Calu3 (cell line): ENCODE measurements at regions of chr7 and their contacts with region 1.

Region 1: DNA sequence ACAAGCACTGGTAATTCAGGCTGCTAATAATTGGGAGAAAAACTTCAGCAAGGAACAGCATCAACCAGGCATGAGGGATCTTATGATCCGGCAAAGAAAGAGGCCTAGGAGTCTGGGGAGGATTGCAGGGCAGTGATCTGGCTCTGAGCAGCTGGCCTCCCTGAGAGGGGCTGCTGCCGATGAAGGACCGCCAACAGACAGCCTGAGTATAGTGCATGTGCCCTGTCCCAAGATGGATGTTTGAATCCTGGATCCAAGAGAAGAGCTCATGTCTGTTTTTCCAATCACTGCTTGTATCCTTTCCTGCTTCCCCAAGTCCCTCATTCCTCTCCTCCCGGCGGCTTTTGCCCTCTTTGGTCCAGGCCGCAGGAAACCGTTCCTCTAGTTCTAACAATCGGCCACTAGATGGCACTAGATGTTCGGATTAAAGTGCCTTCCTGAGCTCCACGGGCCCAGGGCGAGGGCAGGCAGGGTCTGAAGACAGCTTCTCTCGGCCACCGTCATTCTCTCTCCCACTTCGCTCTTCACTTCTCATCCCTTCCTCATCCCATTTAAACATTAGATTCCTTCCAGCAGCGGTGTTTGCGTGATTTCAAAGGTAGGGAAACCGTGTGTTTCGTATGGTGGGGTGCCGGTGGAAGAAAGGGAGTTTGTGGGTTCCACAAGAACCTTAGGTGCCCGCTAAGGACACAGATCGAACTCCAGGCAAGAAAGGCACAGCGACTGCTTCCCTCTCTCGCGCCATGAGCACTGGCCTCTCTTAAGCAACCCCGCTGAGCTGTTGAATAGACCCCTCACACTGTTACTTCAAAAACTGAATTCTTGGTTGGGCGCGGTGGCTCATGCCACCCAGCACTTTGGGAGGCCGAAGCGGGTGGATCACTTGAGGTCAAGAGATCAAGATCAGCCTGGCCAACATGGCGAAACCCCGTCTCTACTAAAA is 82.4 kb downstream of the ADCYAP1R1 start:
- DNase-seq: peak; percentile 87
- H3K4me3 Mint-ChIP-seq: no peak overlapping the region
- H3K27ac Mint-ChIP-seq: no peak overlapping the region
- H3K4me1 Mint-ChIP-seq: no peaks in the 10 kb centered on the region
- H3K27me3 Mint-ChIP-seq: peaks cover 50% of the 10 kb centered on the region
- CTCF ChIP-seq: peak; percentile 92

Region 2: GRCh38 chr7:30983042-30983913 is 151.2 kb before region 1 on chr7:
- CTCF ChIA-PET with region 1: interaction called, 15 read pairs
- intact Hi-C with region 1: no loop called
- DNase-seq: peak; percentile 96
- H3K4me3 Mint-ChIP-seq: peak overlapping the region; percentile 13
- H3K27ac Mint-ChIP-seq: no peak overlapping the region
- H3K4me1 Mint-ChIP-seq: peaks cover 30% of the 10 kb centered on the region
- H3K27me3 Mint-ChIP-seq: peaks cover 51% of the 10 kb centered on the region
- CTCF ChIP-seq: peak; percentile 97

Region 3: DNA sequence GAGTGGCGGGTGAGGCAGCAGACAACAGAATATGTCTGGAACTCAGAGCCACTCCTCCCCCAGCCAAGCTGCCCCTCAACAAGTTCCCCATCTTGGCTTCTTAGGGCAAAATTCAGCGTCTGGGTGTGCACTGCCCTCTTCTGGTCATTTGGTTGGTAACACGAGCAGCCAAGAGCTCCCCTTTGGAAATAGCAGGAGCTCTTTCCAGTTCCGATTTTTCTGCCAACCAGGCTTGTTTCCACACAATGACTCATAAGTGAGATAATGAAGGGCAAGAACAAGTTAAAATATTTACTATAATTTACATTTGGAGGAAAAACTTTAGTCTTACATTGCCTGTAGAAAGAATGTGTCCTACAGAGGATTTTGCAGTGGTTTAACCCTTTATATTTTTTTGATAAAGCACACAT is 11.9 kb before region 1 on chr7:
- CTCF ChIA-PET with region 1: interaction called, 39 read pairs
- intact Hi-C with region 1: no loop called
- DNase-seq: peak; percentile 82
- H3K4me3 Mint-ChIP-seq: no peak overlapping the region
- H3K27ac Mint-ChIP-seq: no peak overlapping the region
- H3K4me1 Mint-ChIP-seq: peaks cover 7% of the 10 kb centered on the region
- H3K27me3 Mint-ChIP-seq: peaks cover 78% of the 10 kb centered on the region
- CTCF ChIP-seq: peak; percentile 85

Region 4: DNA sequence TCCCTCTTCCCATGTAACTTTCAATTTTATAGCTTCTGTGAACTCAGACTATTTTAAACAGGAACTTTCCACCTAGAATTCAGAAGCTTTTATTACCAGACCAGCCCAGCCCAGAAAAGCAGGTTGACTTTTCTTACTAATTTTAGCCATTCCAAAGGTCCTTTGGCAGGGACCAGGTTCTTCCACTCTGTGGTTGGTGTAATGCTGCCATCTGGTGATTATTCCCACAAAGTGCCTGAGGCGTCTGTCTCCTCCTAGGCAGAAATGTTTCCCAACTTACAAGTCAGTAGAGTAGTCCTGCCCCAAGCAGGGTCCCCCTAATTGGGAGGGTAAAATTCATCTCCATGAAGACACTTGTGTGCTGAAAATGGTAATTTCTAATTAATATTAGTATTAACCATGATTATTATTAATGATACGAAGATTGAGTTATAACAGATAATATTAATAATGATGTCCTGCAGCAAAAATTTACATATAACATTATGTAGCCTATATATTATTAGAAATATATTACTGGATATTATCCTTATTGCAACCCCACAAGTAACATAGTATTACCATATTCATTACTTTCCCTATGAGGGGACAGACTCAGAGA is 499.5 kb after region 1 on chr7:
- CTCF ChIA-PET with region 1: interaction called, 19 read pairs
- intact Hi-C with region 1: loop called (anchors 5 kb)
- DNase-seq: peak; percentile 83
- H3K4me3 Mint-ChIP-seq: no peak overlapping the region
- H3K27ac Mint-ChIP-seq: peak overlapping the region; percentile 44
- H3K4me1 Mint-ChIP-seq: peaks cover 28% of the 10 kb centered on the region
- H3K27me3 Mint-ChIP-seq: no peaks in the 10 kb centered on the region
- CTCF ChIP-seq: peak; percentile 92

Region 5: DNA sequence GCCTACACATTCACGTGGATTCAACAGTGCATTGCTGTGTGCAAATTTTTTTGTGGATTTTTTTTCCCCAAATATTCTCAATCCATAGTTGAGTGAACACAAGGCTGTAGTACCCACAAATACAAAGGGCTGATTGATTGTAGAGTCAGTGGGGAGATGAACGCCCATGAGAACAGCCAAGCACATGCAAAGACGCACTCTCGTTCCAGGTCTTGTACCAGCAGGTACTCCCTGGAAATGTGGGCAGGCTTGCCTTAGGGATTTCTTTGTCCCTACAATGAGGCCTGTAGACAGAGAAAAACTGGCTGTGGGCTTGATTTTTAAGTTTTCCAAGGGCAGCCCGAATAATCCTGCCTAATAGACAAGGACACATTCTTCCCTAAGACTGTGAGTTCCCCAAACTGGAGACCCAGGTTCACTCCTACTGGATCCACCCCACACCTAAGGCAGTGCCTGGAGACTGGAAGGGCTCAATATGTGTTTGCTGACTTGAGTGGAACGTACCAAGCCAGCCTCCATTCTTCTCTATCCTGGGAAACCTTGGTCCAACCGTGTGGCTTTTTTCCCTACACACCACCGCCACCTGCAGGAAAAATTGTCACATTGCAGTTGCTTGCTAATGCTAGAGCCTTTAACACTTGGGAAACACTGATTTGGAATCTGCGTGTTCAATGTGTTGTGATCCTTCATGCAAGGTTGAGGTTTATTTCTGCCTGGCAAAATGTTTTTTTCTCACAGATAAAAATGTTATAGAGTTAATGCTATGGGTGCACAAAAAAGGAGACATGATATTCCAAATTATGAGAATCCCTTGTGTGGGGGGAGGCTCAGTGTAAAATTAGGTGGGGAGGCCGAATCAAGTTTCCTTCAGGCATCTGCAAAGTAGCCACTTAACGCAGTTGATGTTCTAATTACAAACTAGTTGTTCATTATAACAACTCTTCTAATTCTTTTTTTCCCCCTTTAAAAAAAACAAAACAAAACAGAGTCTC is 601.8 kb after region 1 on chr7:
- CTCF ChIA-PET with region 1: interaction called, 5 read pairs
- intact Hi-C with region 1: loop called (anchors 1 kb)
- DNase-seq: peak; percentile 86
- H3K4me3 Mint-ChIP-seq: no peak overlapping the region
- H3K27ac Mint-ChIP-seq: no peak overlapping the region
- H3K4me1 Mint-ChIP-seq: no peaks in the 10 kb centered on the region
- H3K27me3 Mint-ChIP-seq: no peaks in the 10 kb centered on the region
- CTCF ChIP-seq: peak; percentile 94